Activated naive CD4-positive, alpha-beta T cell treated with anti-CD3 and anti-CD28 coated beads for 36 hours (primary cell): ENCODE measurements at regions of chr16 and their contacts with region 1.

Region 1: GRCh38 chr16:75148311-75149195 is at the start of gene ZFP1:
- DNase-seq: peak; percentile 97
- H3K4me3 Mint-ChIP-seq: peak within 1 kb of the TSS; percentile 80
- H3K27ac Mint-ChIP-seq: peak within 1 kb of the TSS; percentile 73
- H3K4me1 Mint-ChIP-seq: peaks cover 37% of the 10 kb centered on the region
- H3K27me3 Mint-ChIP-seq: no peaks in the 10 kb centered on the region
- total RNA-seq, gene ZFP1: 20.2 to 20.9 TPM

Region 2: DNA sequence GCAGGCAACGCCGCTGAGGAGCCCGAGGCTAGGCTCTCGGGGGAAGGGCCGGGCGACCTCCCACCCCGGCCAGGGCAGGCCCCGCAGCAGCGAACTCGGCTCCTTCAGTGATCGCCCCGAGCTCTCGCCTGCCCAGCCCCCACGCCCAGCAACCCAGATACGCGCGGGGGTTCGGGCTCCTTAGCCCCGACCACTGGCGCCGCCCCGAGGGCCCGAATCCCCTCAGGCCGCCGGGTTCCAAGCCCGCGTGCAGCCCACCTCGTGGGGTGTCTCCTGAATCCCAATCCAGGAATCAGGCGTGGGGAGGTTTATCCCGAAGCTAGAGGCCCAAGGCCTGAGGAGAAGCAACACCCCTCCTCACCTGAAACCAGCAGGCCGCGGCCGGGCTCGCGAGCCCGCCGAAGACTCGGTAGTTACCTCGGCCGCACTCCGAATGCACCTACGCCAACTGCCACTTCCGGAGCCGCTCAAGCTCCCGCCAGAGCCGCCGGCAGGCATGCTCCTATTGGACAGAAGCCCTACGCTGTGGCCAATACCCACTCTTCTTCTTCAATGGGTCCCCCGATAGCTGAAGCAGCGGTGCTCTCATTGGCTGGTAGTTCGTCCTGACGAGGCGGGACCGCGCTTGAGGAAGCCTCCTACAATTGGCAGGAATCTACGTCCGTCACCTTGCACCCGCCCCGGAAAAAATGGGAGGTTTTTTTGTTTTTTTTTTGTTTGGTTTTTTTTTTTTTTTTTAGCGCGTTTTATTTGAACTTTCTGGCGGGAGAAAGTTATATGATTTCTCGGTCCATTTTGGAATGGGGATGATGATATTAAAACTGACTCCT is 481.9 kb before region 1 on chr16 and contains the start of gene RFWD3:
- CTCF ChIA-PET with region 1: no interaction called
- intact Hi-C with region 1: loop called (anchors 2 kb)
- DNase-seq: peak; percentile 98
- H3K4me3 Mint-ChIP-seq: peak within 1 kb of the TSS; percentile 89
- H3K27ac Mint-ChIP-seq: peak within 1 kb of the TSS; percentile 88
- H3K4me1 Mint-ChIP-seq: peaks cover 39% of the 10 kb centered on the region
- H3K27me3 Mint-ChIP-seq: no peaks in the 10 kb centered on the region
- total RNA-seq, gene RFWD3: 114 to 124 TPM

Region 3: GRCh38 chr16:74984535-74985296 is 163.8 kb before region 1 on chr16 and contains the start of gene WDR59:
- CTCF ChIA-PET with region 1: interaction called, 3 read pairs
- intact Hi-C with region 1: loop called (anchors 1 kb)
- DNase-seq: peak; percentile 100
- H3K4me3 Mint-ChIP-seq: peak within 1 kb of the TSS; percentile 88
- H3K27ac Mint-ChIP-seq: peak within 1 kb of the TSS; percentile 73
- H3K4me1 Mint-ChIP-seq: peaks cover 16% of the 10 kb centered on the region
- H3K27me3 Mint-ChIP-seq: no peaks in the 10 kb centered on the region
- total RNA-seq, gene WDR59: 47.8 to 55.6 TPM

Region 4: DNA sequence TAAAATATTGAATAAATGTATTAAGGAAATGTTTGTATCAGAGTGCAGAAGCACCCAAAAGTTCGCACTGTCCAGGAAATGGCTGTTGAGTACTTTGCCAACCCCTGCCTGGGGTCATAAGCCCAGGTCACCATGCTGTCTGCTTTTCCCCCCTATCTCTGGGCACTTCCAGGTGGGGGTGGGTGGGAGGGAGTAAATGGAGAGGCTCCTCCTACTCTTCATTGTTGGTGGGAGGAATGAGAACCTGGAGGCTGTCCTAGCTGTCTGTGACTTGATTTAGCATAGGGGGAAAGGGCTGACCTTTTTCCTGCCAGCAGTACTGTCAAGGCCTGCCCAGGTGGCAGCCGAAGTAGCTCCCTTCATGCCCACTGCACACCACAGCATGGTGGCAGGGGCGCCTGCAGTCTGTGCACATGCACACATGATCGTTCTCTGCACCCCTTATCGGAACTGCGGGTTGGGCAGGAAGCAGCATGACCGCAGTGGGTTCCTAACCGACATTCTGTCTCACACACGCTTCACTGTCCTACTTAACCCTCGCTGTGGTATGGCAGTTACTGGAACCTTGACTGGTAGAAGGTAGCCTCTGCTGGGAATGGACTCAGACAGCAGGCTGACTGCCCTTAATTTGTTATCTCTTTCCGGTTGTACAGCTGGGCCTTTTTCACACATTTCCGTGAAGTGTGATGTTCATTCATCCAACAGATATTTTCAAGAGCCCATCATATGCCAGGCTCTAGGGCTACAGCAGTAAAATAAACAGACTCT is 73.4 kb before region 1 on chr16:
- CTCF ChIA-PET with region 1: no interaction called
- intact Hi-C with region 1: loop called (anchors 1 kb)
- DNase-seq: peak; percentile 93
- H3K4me3 Mint-ChIP-seq: peak overlapping the region; percentile 34
- H3K27ac Mint-ChIP-seq: peak overlapping the region; percentile 85
- H3K4me1 Mint-ChIP-seq: peaks cover 40% of the 10 kb centered on the region
- H3K27me3 Mint-ChIP-seq: no peaks in the 10 kb centered on the region

Region 5: DNA sequence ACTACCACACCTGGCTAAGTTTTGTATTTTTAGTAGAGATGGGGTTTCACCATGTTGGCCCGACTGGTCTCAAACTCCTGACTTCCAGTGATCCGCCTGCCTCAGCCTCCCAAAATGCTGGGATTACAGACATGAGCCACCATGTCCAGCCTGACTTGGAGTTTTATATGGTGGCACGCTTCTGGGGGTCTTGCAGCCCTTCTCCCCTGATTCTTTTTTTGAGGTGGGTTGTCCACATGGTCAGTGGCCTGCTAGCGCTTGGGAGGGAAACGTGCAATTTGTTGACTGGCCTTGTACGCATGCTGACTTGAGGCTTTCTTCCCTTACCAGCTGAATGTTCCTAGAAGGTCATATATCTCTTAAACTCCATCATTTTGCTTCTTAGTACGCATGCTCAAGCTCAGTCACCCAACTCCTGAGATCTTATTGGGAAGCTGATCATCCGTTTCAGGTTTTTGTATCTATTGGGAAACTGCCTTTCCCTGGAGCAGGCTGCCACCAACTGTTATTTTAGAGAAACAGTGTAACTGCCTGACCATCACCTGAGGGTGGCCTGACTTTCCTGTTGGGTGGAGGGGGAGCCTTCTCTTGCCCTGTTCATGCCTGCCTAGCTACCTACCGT is 18.3 kb before region 1 on chr16:
- CTCF ChIA-PET with region 1: no interaction called
- intact Hi-C with region 1: no loop called
- DNase-seq: no peak
- H3K4me3 Mint-ChIP-seq: no peak overlapping the region
- H3K27ac Mint-ChIP-seq: no peak overlapping the region
- H3K4me1 Mint-ChIP-seq: peaks cover 10% of the 10 kb centered on the region
- H3K27me3 Mint-ChIP-seq: no peaks in the 10 kb centered on the region